Activated CD4-positive, alpha-beta memory T cell treated with anti-CD3 and anti-CD28 coated beads, Interleukin-2, amount 10 ng/mL, durations not matched to agents 7 days and 5 days (primary cell): ENCODE measurements at regions of chr5 and their contacts with region 1.

Region 1: GRCh38 chr5:40834849-40835787 is at the start of gene RPL37:
- DNase-seq: peak; percentile 94
- H3K4me3 Mint-ChIP-seq: peak within 1 kb of the TSS; percentile 99
- H3K27ac Mint-ChIP-seq: peak within 1 kb of the TSS; percentile 98
- H3K4me1 Mint-ChIP-seq: peaks cover 67% of the 10 kb centered on the region
- H3K27me3 Mint-ChIP-seq: no peaks in the 10 kb centered on the region
- total RNA-seq, gene RPL37: 1,494 to 1,565 TPM

Region 2: DNA sequence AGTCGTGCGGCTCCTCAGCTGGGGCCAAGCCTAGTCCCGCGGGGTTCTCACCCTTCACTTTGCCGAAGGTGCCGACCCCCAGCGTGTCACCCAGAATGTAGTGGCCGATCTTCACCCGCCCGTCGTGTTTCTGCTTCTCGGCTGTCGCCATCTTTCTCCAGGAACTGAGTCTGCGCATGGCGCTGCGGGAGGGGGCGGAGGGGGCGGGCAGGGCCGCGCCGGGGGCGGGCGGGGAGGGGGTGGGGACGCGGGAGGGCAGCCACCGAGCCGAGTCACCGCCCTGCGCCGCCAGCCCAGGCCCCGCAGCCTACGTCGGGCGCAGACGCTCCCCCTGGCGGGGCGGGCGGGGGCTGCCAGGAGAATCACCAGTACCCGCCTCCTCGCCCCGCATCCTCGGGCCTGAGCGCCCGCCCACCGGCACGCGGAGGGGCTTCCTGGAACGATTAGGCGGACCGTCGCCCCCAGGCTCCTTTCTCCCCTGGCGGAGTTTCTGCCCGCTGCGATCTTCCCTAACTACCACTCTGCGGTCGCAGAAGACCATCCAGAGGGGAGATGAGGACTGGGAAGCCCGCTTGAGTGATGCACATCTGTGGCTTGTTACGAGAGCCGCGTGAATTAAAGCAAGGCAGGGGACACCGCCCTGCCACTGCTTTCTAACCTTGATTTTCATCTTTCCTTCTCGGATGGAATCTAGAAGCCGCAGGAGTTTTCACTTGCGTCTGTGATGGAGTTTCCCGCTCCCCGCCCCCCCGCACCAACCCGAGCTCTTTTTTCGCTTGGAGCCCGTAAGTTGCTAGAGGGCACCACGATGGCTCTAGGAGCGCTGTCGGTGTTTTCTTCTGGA is 36.9 kb before region 1 on chr5 and contains the start of gene PRKAA1:
- CTCF ChIA-PET with region 1: no interaction called
- POLR2A ChIA-PET with region 1: interaction called, 14 read pairs
- DNase-seq: peak; percentile 91
- H3K4me3 Mint-ChIP-seq: peak within 1 kb of the TSS; percentile 81
- H3K27ac Mint-ChIP-seq: peak within 1 kb of the TSS; percentile 82
- H3K4me1 Mint-ChIP-seq: peaks cover 42% of the 10 kb centered on the region
- H3K27me3 Mint-ChIP-seq: peaks cover 7% of the 10 kb centered on the region
- total RNA-seq, gene PRKAA1: 76.6 to 77.7 TPM

Region 3: GRCh38 chr5:40813698-40814281 is 21.3 kb before region 1 on chr5:
- CTCF ChIA-PET with region 1: no interaction called
- POLR2A ChIA-PET with region 1: interaction called, 19 read pairs
- DNase-seq: peak; percentile 31
- H3K4me3 Mint-ChIP-seq: no peak overlapping the region
- H3K27ac Mint-ChIP-seq: no peak overlapping the region
- H3K4me1 Mint-ChIP-seq: peaks cover 13% of the 10 kb centered on the region
- H3K27me3 Mint-ChIP-seq: no peaks in the 10 kb centered on the region

Region 4: DNA sequence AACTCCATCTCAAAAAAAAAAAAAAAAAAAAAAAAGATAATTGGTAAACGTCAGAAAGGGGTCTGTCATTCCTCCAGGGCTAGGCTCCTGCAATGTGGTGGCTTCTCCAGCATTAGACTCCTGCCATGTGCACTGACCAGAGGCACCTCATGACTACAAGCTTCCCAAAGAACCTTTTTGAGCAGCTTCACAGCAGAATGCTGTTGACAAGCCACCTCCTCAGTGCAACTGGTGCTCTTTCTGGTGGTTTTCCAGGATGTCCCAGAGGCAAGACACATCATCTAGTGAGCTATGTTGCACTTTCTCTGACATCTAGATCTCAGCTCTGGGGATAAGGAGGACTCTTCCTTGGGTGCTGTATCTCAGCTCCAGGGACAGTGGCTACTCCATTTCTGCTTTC is 11.7 kb before region 1 on chr5:
- CTCF ChIA-PET with region 1: interaction called, 3 read pairs
- POLR2A ChIA-PET with region 1: interaction called, 16 read pairs
- DNase-seq: no peak
- H3K4me3 Mint-ChIP-seq: no peak overlapping the region
- H3K27ac Mint-ChIP-seq: no peak overlapping the region
- H3K4me1 Mint-ChIP-seq: no peaks in the 10 kb centered on the region
- H3K27me3 Mint-ChIP-seq: no peaks in the 10 kb centered on the region

Region 5: DNA sequence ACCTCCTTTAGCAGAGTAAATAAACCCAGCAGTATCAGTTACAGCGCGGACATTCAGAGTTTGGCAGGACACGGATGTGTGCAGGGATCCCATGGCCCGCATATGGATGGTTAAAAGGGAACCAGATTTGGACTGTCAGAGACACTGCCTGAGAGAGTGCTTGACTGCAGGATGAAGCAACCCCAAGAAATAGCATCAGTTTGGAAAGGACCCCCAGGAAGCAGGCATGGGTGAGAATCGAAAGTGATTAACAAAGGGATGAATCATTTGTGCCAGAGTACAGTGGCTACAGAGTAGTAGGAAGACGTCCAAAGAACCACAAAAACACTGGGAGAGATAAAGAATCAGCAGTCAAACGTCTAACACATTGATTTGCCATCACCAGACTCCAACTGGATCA is 79.7 kb after region 1 on chr5:
- CTCF ChIA-PET with region 1: no interaction called
- POLR2A ChIA-PET with region 1: no interaction called
- DNase-seq: no peak
- H3K4me3 Mint-ChIP-seq: no peak overlapping the region
- H3K27ac Mint-ChIP-seq: no peak overlapping the region
- H3K4me1 Mint-ChIP-seq: no peaks in the 10 kb centered on the region
- H3K27me3 Mint-ChIP-seq: peaks cover 13% of the 10 kb centered on the region